Natural killer cell (primary cell): ENCODE measurements at regions of chr12 and their contacts with region 1.

Region 1: DNA sequence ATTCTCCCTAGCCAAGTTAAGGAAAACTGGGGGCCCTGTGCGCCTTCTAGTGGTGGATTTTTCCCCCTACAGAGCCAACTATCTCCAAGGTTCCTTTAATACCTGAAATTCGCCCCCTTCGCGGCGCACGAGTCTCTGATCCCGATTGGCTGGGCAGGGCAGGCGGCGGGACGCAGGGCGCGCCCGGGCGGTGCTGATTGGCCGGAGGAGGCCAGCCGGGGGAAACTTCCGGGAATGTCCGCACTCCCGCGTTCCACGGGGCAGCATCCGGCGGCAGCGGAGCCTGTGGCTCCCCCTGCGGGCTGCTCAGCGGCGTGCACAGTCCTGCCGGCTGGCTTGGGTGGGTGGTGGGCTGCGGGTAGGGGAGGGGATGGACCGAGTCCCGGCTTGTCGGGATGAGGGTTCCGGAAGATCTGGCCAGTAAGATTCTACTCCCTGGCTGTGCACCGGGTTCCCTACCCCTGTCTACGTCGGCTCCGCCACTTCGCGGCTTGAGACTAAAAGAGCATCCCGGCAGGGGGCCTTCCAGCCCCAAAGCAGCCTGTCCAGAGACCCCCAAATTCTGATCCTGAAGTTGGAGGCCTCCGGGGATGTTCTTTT is at the start of gene NABP2:
- DNase-seq: peak; percentile 85 to 96
- ATAC-seq: peak; percentile 70 to 86 (median 79)
- H3K4me3 ChIP-seq: peak within 1 kb of the TSS; percentile 56
- H3K4me3 Mint-ChIP-seq: peak within 1 kb of the TSS; percentile 92
- H3K27ac ChIP-seq: peak within 1 kb of the TSS; percentile 70
- H3K27ac Mint-ChIP-seq: peak within 1 kb of the TSS; percentile 100
- H3K4me1 ChIP-seq: peaks cover 47% of the 10 kb centered on the region
- H3K4me1 Mint-ChIP-seq: peaks cover 48 to 53% of the 10 kb centered on the region in 2 donors
- H3K27me3 ChIP-seq: no peaks in the 10 kb centered on the region
- H3K27me3 Mint-ChIP-seq: no peaks in the 10 kb centered on the region
- CTCF ChIP-seq: peak; percentile 91
- total RNA-seq, gene NABP2: 21.6 to 23.4 (median 22.6) TPM

Region 2: DNA sequence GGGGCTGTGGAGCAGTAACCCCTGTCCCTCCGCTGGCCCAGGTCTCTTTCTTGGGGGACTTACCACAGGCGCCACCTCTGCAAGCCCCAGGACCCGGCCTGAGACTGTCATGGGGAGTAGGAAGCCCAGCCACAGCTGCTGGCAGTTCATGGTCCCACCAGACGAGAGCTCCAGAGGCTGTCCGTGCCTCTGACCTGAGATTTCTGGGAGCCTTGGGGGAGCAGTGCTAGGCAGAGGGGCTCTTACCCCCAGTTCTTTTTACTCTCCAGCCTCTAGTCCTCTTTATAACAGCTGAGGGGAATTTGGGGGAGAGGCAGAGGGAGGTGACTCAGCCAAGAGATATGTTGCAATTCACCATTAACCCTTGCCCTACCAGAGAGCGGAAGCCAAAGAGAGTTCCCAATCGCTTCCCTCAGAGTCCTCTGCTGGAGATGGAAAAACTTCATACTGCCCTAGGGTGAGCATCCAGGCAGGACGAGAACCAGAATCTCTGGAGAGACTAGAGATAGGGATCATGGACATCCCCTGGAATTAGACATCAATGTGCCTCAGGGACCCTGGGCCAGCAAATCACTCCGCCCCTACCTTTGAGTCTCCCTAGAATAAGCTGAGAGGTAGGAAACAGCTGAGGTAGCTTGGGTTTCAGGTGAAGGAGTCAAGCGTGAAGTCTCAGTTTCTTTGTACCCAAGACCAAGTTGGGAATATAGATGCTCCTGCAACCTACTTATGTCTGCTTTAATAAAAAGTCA is 381.3 kb before region 1 on chr12 and contains the start of gene MMP19:
- intact Hi-C with region 1: no loop called
- DNase-seq: no peak
- ATAC-seq: no peak
- H3K4me3 ChIP-seq: no peak within 1 kb of the TSS
- H3K4me3 Mint-ChIP-seq: no peak within 1 kb of the TSS
- H3K27ac ChIP-seq: no peak within 1 kb of the TSS
- H3K27ac Mint-ChIP-seq: no peak within 1 kb of the TSS
- H3K4me1 ChIP-seq: no peaks in the 10 kb centered on the region
- H3K4me1 Mint-ChIP-seq: no peaks in the 10 kb centered on the region
- H3K27me3 ChIP-seq: no peaks in the 10 kb centered on the region
- H3K27me3 Mint-ChIP-seq: peaks cover 3 to 6% of the 10 kb centered on the region in 2 donors
- CTCF ChIP-seq: no peak
- total RNA-seq, gene MMP19: 0.45 to 0.88 TPM in 2 of 3 donors, not detected in the other

Region 3: DNA sequence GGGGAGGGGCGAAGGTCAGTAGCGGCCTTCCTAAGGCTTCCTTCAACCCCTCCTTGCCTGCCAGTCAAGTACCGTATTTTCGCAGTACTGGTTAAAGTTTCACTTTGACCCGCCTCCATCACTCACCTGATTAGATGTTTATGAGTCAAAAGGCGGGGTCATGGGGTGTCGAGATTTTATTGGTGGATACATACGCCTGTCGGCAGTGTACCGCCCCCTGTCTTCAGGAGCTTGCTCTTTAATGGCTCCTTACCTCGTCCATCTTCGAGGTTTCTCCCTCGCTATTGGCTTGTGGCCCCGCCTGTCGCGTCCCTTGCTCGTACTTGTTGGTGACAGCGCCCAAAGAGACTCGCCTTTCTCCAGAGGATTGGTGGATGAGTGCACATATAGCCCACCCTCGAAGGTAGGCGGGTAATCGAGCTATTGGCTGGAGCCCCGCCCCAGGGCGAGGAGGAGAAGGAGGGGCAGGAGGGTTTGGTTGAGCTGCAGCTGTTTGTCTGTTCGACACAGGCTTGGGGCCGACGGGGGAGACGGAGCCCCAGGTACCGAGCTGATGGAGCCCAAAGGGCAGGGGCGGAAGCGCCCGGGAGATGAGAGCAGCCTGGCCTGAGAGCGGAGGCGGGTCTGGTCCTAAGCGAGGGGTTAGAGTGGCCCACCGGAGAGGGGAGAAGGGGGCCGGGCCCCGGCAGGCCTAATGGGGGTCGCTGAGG is 250.4 kb before region 1 on chr12 and contains the start of gene RAB5B:
- intact Hi-C with region 1: loop called (anchors 5 kb)
- DNase-seq: peak; percentile 93 to 99
- ATAC-seq: peak; percentile 85 to 95 (median 85)
- H3K4me3 ChIP-seq: peak within 1 kb of the TSS; percentile 83
- H3K4me3 Mint-ChIP-seq: no peak within 1 kb of the TSS
- H3K27ac ChIP-seq: peak within 1 kb of the TSS; percentile 84
- H3K27ac Mint-ChIP-seq: no peak within 1 kb of the TSS
- H3K4me1 ChIP-seq: peaks cover 14% of the 10 kb centered on the region
- H3K4me1 Mint-ChIP-seq: peaks cover 18 to 24% of the 10 kb centered on the region in 2 donors
- H3K27me3 ChIP-seq: no peaks in the 10 kb centered on the region
- H3K27me3 Mint-ChIP-seq: no peaks in the 10 kb centered on the region
- CTCF ChIP-seq: no peak
- total RNA-seq, gene RAB5B: 69.4 to 80.0 (median 78.2) TPM

Region 4: GRCh38 chr12:56143870-56144269 is 80.3 kb before region 1 on chr12:
- intact Hi-C with region 1: no loop called
- DNase-seq: no peak
- ATAC-seq: no peak
- H3K4me3 ChIP-seq: no peak overlapping the region
- H3K4me3 Mint-ChIP-seq: no peak overlapping the region
- H3K27ac ChIP-seq: no peak overlapping the region
- H3K27ac Mint-ChIP-seq: peak overlapping the region; percentile 58 to 75
- H3K4me1 ChIP-seq: peaks cover 11% of the 10 kb centered on the region
- H3K4me1 Mint-ChIP-seq: peaks cover under 1 to 9% of the 10 kb centered on the region in 2 donors
- H3K27me3 ChIP-seq: no peaks in the 10 kb centered on the region
- H3K27me3 Mint-ChIP-seq: no peaks in the 10 kb centered on the region
- CTCF ChIP-seq: no peak

Region 5: DNA sequence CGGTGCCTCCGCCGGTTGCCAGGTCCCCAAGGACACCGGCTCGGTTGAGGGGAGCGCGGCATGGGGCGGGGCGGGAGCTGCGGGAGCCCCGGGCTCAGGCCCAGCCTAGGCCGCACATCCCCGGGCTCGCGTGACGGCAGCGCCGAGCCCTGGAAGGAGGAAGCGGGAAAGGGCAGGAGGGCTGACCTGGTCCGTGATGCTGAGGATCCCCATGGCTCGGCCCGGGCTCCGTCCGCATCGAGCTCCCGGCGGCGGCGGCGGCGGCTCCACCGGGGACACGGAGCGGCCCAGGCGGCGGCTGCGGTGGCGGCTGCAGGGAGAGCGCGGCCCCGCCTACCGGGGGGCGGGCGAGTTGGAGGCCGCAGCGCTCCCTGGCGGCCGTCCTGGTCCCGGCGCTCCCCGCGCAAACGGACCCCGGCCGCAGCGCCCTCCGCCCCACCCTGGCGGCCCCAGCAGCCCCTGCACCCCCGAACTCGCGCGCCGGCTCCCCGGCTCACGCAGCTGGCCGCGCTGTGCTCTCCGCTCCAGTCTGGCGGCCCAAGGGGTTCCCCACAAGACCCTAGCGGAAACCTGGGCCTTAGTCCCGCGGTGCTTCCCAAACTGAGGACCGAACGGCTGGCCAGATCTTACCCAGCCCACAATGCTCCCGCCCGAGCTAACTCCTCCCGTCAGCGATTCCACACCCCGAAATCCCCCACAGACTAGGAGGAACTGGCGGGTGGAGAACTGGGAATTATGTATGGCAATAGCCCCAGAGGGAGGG is 34.0 kb after region 1 on chr12 and contains the start of gene ANKRD52:
- intact Hi-C with region 1: loop called (anchors 5 kb)
- DNase-seq: peak; percentile 84 to 93
- ATAC-seq: peak; percentile 97 to 98 (median 97)
- H3K4me3 ChIP-seq: peak within 1 kb of the TSS; percentile 75
- H3K4me3 Mint-ChIP-seq: peak within 1 kb of the TSS; percentile 94
- H3K27ac ChIP-seq: peak within 1 kb of the TSS; percentile 63
- H3K27ac Mint-ChIP-seq: peak within 1 kb of the TSS; percentile 80 to 88
- H3K4me1 ChIP-seq: peaks cover 24% of the 10 kb centered on the region
- H3K4me1 Mint-ChIP-seq: peaks cover 8 to 26% of the 10 kb centered on the region in 2 donors
- H3K27me3 ChIP-seq: no peaks in the 10 kb centered on the region
- H3K27me3 Mint-ChIP-seq: no peaks in the 10 kb centered on the region
- CTCF ChIP-seq: peak; percentile 82
- total RNA-seq, gene ANKRD52: 34.1 to 52.2 (median 51.4) TPM

Region 6: DNA sequence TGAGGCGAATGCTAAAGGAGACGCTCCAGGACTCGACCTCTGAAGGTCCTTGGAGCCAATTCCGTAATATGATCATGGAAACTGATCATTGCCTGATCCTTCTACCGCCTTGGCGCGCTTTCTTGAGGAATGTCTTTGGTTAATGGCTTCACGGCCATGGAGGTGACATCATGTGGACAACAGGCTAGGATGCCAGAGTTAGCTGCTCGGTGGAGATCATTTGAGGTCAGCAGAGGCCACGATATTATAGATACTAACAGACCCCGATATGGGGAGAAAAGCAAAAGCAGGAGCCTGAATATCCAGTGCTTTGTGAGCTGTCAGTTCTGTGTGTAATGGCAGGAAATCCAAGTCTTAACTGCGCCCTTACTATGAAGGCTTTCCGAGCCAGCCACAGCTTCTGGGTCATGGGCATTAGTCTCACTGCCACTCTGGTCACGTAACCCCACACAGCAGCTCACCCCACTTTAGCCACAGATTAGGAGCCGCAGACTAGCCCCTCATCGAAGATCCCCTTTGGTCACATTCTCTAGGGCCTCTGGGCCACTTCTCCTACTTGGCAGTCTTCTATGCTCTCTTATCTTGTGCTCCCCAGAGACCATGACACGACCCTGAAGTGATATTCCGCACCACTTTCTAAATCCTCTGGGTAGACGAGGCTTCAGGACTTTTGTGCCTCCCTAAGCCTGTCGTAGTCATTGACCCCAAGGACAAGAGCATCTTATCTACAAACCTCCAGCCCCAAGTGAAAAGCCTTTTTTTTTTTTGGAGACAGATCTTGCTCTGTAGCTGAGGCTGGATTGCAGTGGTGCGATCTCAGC is 76.7 kb after region 1 on chr12:
- intact Hi-C with region 1: no loop called
- DNase-seq: no peak
- ATAC-seq: no peak
- H3K4me3 ChIP-seq: peak overlapping the region; percentile 72
- H3K4me3 Mint-ChIP-seq: peak overlapping the region; percentile 93
- H3K27ac ChIP-seq: peak overlapping the region; percentile 88
- H3K27ac Mint-ChIP-seq: peak overlapping the region; percentile 97 to 98
- H3K4me1 ChIP-seq: peaks cover 34% of the 10 kb centered on the region
- H3K4me1 Mint-ChIP-seq: peaks cover 55 to 56% of the 10 kb centered on the region in 2 donors
- H3K27me3 ChIP-seq: no peaks in the 10 kb centered on the region
- H3K27me3 Mint-ChIP-seq: no peaks in the 10 kb centered on the region
- CTCF ChIP-seq: no peak

Region 7: DNA sequence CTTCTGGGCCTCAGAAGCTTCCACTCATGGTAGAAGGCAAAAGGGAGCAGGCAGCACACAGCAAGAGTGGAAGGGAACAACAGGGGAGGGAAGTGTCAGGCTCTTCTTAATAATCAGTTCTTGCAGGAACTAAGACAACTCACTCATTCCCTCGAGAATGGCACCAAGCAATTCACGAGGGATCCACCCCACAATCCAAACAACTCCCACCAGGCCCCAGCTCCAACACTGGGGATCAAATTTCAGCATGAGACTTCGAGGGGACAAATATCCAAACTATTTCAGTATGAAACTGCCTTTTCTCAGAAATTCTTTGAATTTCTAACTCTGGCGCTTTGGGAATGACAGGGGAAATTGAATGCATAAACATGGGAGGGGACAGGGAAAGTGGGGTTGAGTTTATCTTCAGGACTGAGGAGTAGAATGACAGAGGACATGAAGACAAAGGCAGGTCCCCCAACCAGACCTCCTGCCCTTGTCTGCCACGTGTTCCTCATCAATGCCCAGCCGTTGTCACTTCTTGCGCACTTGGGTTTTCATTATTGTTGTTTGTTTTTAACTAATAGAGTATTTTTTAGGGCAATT is 163.0 kb after region 1 on chr12:
- intact Hi-C with region 1: no loop called
- DNase-seq: no peak
- ATAC-seq: no peak
- H3K4me3 ChIP-seq: no peak overlapping the region
- H3K4me3 Mint-ChIP-seq: no peak overlapping the region
- H3K27ac ChIP-seq: no peak overlapping the region
- H3K27ac Mint-ChIP-seq: no peak overlapping the region
- H3K4me1 ChIP-seq: no peaks in the 10 kb centered on the region
- H3K4me1 Mint-ChIP-seq: no peaks in the 10 kb centered on the region
- H3K27me3 ChIP-seq: no peaks in the 10 kb centered on the region
- H3K27me3 Mint-ChIP-seq: peaks cover 0 to 3% of the 10 kb centered on the region in 2 donors
- CTCF ChIP-seq: no peak